Activated naive CD4-positive, alpha-beta T cell treated with anti-CD3 and anti-CD28 coated beads for 36 hours (primary cell): ENCODE measurements at regions of chr16 and their contacts with region 1.

Region 1: DNA sequence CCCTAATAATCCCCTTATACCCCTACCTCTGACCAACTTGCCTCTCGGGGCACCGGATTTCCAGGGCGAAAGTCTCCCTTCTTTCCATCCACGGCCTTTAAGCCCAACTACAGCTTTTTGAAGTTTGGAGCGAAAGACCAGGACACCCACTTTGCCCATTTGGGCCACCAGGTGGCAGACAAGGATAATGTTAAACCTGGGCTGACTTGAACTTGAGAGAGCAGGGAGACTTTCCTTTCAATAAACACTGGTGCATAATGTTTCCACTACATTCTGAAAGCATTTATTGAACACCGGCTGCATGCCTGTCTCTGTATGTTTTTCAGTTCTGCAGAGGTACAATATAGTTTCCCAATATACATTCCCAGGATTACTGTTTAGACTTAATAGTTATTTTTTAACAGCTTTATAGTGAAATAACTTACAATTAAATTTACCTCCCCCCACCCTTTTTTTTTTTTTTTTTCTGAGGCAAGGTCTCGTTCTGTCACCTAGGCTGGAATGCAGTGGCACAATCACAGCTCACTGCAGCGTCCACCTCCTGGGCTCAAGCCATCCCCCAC is 6.9 kb upstream of the CES3 start:
- DNase-seq: peak; percentile 90
- H3K4me3 Mint-ChIP-seq: no peak overlapping the region
- H3K27ac Mint-ChIP-seq: no peak overlapping the region
- H3K4me1 Mint-ChIP-seq: peaks cover 14% of the 10 kb centered on the region
- H3K27me3 Mint-ChIP-seq: peaks cover 27% of the 10 kb centered on the region

Region 2: DNA sequence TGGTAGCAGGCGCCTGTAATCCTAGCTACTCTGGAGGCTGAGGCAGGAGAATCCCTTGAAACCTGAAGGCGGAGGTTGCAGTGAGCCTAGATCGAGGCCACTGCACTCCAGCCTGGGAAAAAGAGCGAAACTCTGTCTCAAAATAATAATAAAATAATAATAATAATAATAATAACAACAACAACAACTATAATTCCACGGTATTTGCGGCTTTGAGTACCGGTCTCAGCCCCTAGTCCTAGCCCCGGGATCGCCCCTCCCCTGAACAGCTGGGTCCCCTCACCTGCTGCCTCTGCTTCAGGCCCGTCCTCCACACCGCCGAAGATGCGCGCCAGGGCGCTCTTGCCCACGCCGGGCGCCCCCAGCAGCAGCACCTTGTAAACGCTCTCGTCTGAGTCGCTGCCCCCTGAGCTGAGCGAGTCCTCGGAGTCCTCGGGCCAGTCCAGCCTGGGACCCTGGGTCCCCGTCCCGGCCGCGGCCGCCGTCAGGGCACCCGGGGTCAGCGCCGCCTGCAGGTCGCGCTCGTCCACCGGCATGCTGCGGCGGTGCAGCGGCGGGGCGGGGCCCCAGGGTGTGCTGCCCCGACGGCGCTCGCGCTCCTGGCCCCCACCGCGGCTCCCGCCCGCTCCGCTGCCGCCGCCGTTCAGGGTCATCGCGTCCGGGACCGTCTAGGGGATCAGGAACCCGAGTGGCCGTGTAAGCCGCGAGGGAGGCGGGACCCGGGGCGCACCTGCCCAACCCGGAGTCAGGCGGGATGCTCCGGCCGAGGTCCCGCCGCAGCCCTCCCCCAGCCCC is 29.5 kb before region 1 on chr16:
- CTCF ChIA-PET with region 1: no interaction called
- intact Hi-C with region 1: no loop called
- DNase-seq: peak; percentile 42
- H3K4me3 Mint-ChIP-seq: peak overlapping the region; percentile 66
- H3K27ac Mint-ChIP-seq: no peak overlapping the region
- H3K4me1 Mint-ChIP-seq: peaks cover 10% of the 10 kb centered on the region
- H3K27me3 Mint-ChIP-seq: peaks cover 24% of the 10 kb centered on the region

Region 3: GRCh38 chr16:67415872-67416793 is 462.0 kb after region 1 on chr16 and contains the start of gene ZDHHC1:
- CTCF ChIA-PET with region 1: no interaction called
- intact Hi-C with region 1: loop called (anchors 10 kb)
- DNase-seq: peak; percentile 48
- H3K4me3 Mint-ChIP-seq: peak within 1 kb of the TSS; percentile 66
- H3K27ac Mint-ChIP-seq: no peak within 1 kb of the TSS
- H3K4me1 Mint-ChIP-seq: peaks cover 6% of the 10 kb centered on the region
- H3K27me3 Mint-ChIP-seq: peaks cover 34% of the 10 kb centered on the region
- total RNA-seq, gene ZDHHC1: 0.12 to 0.32 TPM